GM12878 (cell line): ENCODE measurements at regions of chr7 and their contacts with region 1.

Region 1: GRCh38 chr7:129017933-129018538 is 36.9 kb downstream of the TNPO3 start:
- DNase-seq: peak; percentile 64
- ATAC-seq: peak; percentile 94
- H3K4me3 ChIP-seq: no peak overlapping the region; the same call in 1 of the 2 replicates
- H3K27ac ChIP-seq: peak overlapping the region; percentile 93
- H3K4me1 ChIP-seq: peaks cover 42% of the 10 kb centered on the region
- H3K27me3 ChIP-seq: no peaks in the 10 kb centered on the region
- CTCF ChIP-seq: no peak
- EP300 ChIP-seq: no peak
- POLR2A ChIP-seq: no peak
- RAD21 ChIP-seq: no peak

Region 2: GRCh38 chr7:128801003-128801402 is 217.0 kb before region 1 on chr7:
- CTCF ChIA-PET with region 1: no interaction called
- POLR2A ChIA-PET with region 1: no interaction called
- RAD21 ChIA-PET with region 1: no interaction called
- SMC1A ChIA-PET with region 1: no interaction called
- in situ Hi-C with region 1: no loop called
- intact Hi-C with region 1: no loop called
- DNase-seq: no peak
- ATAC-seq: no peak
- H3K4me3 ChIP-seq: no peak overlapping the region
- H3K27ac ChIP-seq: no peak overlapping the region
- H3K4me1 ChIP-seq: no peaks in the 10 kb centered on the region
- H3K27me3 ChIP-seq: no peaks in the 10 kb centered on the region
- CTCF ChIP-seq: no peak
- EP300 ChIP-seq: no peak
- POLR2A ChIP-seq: no peak
- RAD21 ChIP-seq: no peak

Region 3: GRCh38 chr7:129030440-129030839 is 12.4 kb after region 1 on chr7:
- CTCF ChIA-PET with region 1: no interaction called
- POLR2A ChIA-PET with region 1: interaction called, 5 read pairs
- RAD21 ChIA-PET with region 1: interaction called, 3 read pairs
- SMC1A ChIA-PET with region 1: interaction called, 29 read pairs
- in situ Hi-C with region 1: no loop called
- intact Hi-C with region 1: no loop called
- DNase-seq: no peak
- ATAC-seq: no peak
- H3K4me3 ChIP-seq: no peak overlapping the region
- H3K27ac ChIP-seq: no peak overlapping the region
- H3K4me1 ChIP-seq: no peaks in the 10 kb centered on the region; the same call in 1 of the 2 replicates
- H3K27me3 ChIP-seq: no peaks in the 10 kb centered on the region
- CTCF ChIP-seq: no peak
- EP300 ChIP-seq: no peak
- POLR2A ChIP-seq: no peak
- RAD21 ChIP-seq: no peak

Region 4: GRCh38 chr7:129066290-129067131 is 48.5 kb after region 1 on chr7:
- CTCF ChIA-PET with region 1: interaction called, 3 read pairs
- POLR2A ChIA-PET with region 1: interaction called, 4 read pairs
- RAD21 ChIA-PET with region 1: no interaction called
- SMC1A ChIA-PET with region 1: interaction called, 11 read pairs
- in situ Hi-C with region 1: no loop called
- intact Hi-C with region 1: no loop called
- DNase-seq: no peak
- ATAC-seq: peak; percentile 35
- H3K4me3 ChIP-seq: no peak overlapping the region
- H3K27ac ChIP-seq: no peak overlapping the region
- H3K4me1 ChIP-seq: no peaks in the 10 kb centered on the region
- H3K27me3 ChIP-seq: no peaks in the 10 kb centered on the region
- CTCF ChIP-seq: no peak
- EP300 ChIP-seq: no peak
- POLR2A ChIP-seq: no peak
- RAD21 ChIP-seq: no peak